Activated CD4-positive, alpha-beta T cell treated with anti-CD3 and anti-CD28 coated beads for 36 hours (primary cell): ENCODE measurements at regions of chr5 and their contacts with region 1.

Region 1: DNA sequence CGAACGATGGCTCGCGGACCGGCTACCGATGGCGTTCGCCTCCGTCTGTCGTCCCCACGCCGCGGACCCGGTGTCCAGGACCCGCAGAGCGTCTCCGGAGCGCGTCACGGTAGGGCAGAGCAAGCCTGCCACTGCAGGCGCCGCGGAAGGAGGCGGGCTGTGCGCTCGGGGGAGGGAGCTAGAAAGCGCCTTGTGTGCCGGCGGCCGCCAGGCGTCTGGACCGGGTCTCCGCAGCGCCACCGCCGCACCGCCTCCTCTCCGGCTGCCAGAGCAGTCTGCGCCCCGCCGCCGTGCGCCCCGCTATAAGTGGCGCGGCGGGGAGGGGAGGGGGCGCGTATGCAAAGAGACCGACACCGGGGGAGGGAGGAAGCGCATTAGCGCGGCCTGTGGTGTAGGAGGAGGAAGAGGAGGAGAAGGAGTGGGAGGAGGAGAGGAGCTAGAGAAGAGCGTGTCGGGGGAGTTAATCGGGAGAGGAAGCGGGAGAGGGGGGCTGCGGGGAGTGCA is at the start of gene ENC1:
- DNase-seq: peak; percentile 88
- ATAC-seq: peak; percentile 80
- H3K4me3 Mint-ChIP-seq: peak within 1 kb of the TSS; percentile 72
- H3K27ac Mint-ChIP-seq: peak within 1 kb of the TSS; percentile 20
- H3K4me1 Mint-ChIP-seq: peaks cover 32% of the 10 kb centered on the region
- H3K27me3 Mint-ChIP-seq: peaks cover 15% of the 10 kb centered on the region
- total RNA-seq, gene ENC1: 0.48 to 0.67 TPM

Region 2: GRCh38 chr5:73792687-73793320 is 847.7 kb before region 1 on chr5:
- CTCF ChIA-PET with region 1: no interaction called
- POLR2A ChIA-PET with region 1: no interaction called
- intact Hi-C with region 1: loop called in 1 of 2 experiments (anchors 10 kb)
- DNase-seq: peak; percentile 77
- ATAC-seq: peak; percentile 84
- H3K4me3 Mint-ChIP-seq: no peak overlapping the region
- H3K27ac Mint-ChIP-seq: no peak overlapping the region
- H3K4me1 Mint-ChIP-seq: no peaks in the 10 kb centered on the region
- H3K27me3 Mint-ChIP-seq: peaks cover 14% of the 10 kb centered on the region

Region 3: DNA sequence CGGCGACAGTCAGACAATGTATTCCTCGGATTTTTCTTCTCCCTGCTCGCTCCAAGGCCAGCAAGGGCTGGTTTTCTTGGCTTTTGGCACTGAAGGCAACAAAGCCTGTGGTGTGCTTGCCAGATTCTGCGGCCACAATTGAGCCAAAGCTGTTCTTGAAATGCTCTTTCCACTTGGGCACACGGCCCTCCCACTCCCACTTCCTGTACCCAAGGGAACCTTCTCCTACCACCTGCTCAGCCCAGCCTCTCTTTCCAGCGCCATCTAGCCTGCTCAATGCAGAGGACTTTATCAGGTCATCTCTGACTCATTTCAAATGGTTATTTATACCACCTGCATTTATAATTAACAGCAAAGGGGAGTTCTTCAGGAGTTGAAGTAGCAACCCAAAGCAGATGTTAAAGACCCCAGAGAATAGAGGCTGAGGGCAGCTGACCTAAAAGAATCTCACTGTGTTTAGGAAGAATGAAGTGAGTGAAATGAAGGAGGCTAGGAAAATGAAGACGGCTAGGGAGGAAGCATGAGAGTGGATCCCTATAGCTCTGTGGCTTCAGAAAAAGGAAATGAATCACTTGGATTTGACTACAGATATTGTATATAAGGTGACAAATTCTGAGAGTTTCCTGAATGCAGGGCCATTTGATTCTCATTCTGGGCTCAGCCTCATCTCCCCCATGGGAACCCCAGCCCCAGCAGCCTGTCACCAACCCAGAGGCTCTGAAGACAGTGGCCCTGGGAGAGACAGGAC is 439.0 kb before region 1 on chr5:
- CTCF ChIA-PET with region 1: no interaction called
- POLR2A ChIA-PET with region 1: no interaction called
- intact Hi-C with region 1: loop called in 1 of 2 experiments (anchors 10 kb)
- DNase-seq: peak; percentile 23
- ATAC-seq: peak; percentile 73
- H3K4me3 Mint-ChIP-seq: no peak overlapping the region
- H3K27ac Mint-ChIP-seq: no peak overlapping the region
- H3K4me1 Mint-ChIP-seq: peaks cover 17% of the 10 kb centered on the region
- H3K27me3 Mint-ChIP-seq: peaks cover 6% of the 10 kb centered on the region

Region 4: GRCh38 chr5:74326571-74327338 is 313.7 kb before region 1 on chr5:
- CTCF ChIA-PET with region 1: interaction called, 3 read pairs
- POLR2A ChIA-PET with region 1: no interaction called
- intact Hi-C with region 1: loop called in 1 of 2 experiments (anchors 5 kb)
- DNase-seq: peak; percentile 86
- ATAC-seq: peak; percentile 91
- H3K4me3 Mint-ChIP-seq: no peak overlapping the region
- H3K27ac Mint-ChIP-seq: no peak overlapping the region
- H3K4me1 Mint-ChIP-seq: peaks cover 22% of the 10 kb centered on the region
- H3K27me3 Mint-ChIP-seq: peaks cover 25% of the 10 kb centered on the region

Region 5: DNA sequence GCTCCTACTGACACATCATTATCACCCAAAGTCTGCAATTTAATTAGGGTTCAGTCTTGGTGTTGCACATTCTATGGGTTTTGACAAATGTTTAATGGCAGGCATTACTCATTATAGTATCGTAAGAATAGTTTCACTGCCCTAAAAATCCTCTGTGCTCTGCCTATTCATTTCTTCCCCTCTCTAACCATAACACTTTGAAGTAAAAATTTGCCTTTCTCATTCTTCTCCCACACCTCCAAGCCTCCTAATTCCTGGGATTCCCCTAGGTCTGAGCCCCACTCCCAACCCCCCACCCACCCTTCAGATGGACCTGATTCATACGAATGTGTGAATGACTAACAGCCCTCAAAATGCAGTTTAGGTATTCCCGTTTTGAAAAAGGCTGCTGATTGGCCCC is 18.4 kb before region 1 on chr5:
- CTCF ChIA-PET with region 1: interaction called, 7 read pairs
- POLR2A ChIA-PET with region 1: interaction called, 4 read pairs
- intact Hi-C with region 1: loop called in 1 of 2 experiments (anchors 1 kb)
- DNase-seq: peak; percentile 59
- ATAC-seq: peak; percentile 93
- H3K4me3 Mint-ChIP-seq: no peak overlapping the region
- H3K27ac Mint-ChIP-seq: no peak overlapping the region
- H3K4me1 Mint-ChIP-seq: peaks cover 20% of the 10 kb centered on the region
- H3K27me3 Mint-ChIP-seq: peaks cover 39% of the 10 kb centered on the region

Region 6: DNA sequence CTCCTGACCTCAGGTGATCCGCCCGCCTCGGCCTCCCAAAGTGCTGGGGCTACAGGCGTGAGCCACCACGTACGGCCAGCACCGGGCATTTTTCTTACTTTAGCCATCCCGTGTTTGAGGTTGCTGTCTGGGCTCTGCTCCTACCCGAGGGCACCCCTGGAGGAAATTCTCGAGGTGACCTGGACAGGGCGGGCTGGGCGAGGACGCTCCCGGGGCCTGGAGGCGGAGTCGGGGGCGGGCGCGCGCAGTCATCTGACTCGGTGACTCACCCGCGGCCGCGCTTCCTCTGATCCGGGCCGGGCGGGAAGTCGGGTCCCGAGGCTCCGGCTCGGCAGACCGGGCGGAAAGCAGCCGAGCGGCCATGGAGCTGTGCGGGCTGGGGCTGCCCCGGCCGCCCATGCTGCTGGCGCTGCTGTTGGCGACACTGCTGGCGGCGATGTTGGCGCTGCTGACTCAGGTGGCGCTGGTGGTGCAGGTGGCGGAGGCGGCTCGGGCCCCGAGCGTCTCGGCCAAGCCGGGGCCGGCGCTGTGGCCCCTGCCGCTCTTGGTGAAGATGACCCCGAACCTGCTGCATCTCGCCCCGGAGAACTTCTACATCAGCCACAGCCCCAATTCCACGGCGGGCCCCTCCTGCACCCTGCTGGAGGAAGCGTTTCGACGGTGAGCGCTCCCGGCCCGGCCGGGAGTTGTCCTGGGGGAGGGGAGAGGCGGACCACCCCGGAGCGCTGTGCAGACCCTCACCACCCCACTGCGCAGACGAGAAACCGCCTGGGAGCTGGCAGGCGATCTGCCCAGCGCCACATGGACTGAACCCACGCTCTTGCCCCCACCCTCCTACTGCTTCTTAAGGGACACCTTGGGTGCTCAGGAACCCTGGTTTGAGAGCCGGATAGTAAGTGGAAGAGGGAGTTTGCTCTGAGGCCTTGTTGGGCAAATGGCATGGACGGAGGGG is 44.7 kb after region 1 on chr5 and contains the start of gene HEXB:
- CTCF ChIA-PET with region 1: no interaction called
- POLR2A ChIA-PET with region 1: no interaction called
- intact Hi-C with region 1: loop called in 1 of 2 experiments (anchors 1 kb)
- DNase-seq: peak; percentile 94
- ATAC-seq: peak; percentile 98
- H3K4me3 Mint-ChIP-seq: peak within 1 kb of the TSS; percentile 73
- H3K27ac Mint-ChIP-seq: peak within 1 kb of the TSS; percentile 87
- H3K4me1 Mint-ChIP-seq: peaks cover 21% of the 10 kb centered on the region
- H3K27me3 Mint-ChIP-seq: no peaks in the 10 kb centered on the region
- total RNA-seq, gene HEXB: 42.6 to 47.6 TPM